ENCODE measurements at regions of chr1 and their contacts with region 1.

Region 1: DNA sequence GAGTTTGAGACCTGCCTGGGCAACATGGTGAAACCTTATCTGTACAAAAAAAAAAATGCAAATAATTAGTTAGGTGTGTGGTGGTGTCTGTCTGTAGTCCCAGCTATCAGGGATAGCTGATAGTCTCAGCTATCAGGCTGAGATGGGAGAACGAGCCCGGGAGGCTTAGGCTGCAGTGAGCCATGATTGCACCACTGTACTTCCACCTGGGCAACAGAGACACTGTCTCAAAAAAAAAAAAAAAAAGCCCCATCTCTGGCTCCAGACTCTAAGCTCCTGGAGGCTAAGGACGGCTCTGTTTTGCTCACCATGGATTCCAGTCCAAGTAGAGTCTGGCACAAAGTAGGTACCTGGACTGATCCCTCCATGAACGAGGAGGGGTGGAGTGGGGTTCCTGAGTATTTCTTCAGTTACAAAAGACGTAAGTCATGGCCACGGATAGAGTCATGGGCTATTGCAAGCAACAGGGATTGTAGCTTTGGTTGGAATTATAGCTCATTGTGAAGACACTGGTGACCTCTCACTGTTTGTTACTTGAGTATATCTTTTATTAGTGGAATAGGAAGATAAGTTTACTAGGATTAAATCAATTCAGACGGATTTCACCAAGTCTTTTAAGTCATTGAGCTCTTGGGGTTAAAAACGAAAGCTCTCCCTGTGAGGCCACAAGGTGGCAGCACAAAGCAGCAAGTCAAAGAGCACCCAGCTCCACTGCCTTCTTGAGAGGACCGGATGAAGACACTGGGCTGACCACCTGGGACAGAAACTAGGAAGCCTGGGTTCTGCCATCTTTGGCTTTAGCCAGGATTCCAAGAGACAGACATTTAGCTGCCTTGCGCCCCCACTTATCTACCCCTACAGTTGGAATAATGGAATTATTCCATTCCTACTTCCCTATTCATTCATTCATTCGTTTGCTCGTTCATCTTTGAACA is 35.6 kb upstream of the TMEM61 start:
- DNase-seq: peak; percentile 17 to 61 (median 45)
- ATAC-seq: peak; percentile 80
- H3K4me3 ChIP-seq: no peak overlapping the region
- H3K4me3 Mint-ChIP-seq: peak overlapping the region in 1 of 10 donors; percentile 28
- H3K27ac ChIP-seq: no peak overlapping the region
- H3K27ac Mint-ChIP-seq: no peak overlapping the region
- H3K4me1 ChIP-seq: peaks cover 3 to 7% of the 10 kb centered on the region in 2 donors
- H3K4me1 Mint-ChIP-seq: peaks cover 9 to 16% (median 11%) of the 10 kb centered on the region in 7 donors
- H3K27me3 ChIP-seq: no peaks in the 10 kb centered on the region
- H3K27me3 Mint-ChIP-seq: peaks cover 0 to 11% (median 0%) of the 10 kb centered on the region in 5 donors

Region 2: GRCh38 chr1:54671985-54672608 is 272.8 kb before region 1 on chr1:
- CTCF ChIA-PET with region 1: no interaction called
- POLR2A ChIA-PET with region 1: no interaction called
- intact Hi-C with region 1: loop called in 1 of 2 experiments (anchors 5 kb)
- DNase-seq: peak; percentile 18 to 69 (median 53)
- ATAC-seq: peak; percentile 86
- H3K4me3 ChIP-seq: no peak overlapping the region
- H3K4me3 Mint-ChIP-seq: no peak overlapping the region
- H3K27ac ChIP-seq: no peak overlapping the region
- H3K27ac Mint-ChIP-seq: no peak overlapping the region
- H3K4me1 ChIP-seq: no peaks in the 10 kb centered on the region
- H3K4me1 Mint-ChIP-seq: peaks cover 0 to 6% (median 0%) of the 10 kb centered on the region in 7 donors
- H3K27me3 ChIP-seq: no peaks in the 10 kb centered on the region
- H3K27me3 Mint-ChIP-seq: peaks cover 0 to 10% (median 0%) of the 10 kb centered on the region in 5 donors

Region 3: GRCh38 chr1:55304229-55304740 is 359.4 kb after region 1 on chr1:
- CTCF ChIA-PET with region 1: no interaction called
- POLR2A ChIA-PET with region 1: no interaction called
- intact Hi-C with region 1: no loop called
- DNase-seq: no peak
- ATAC-seq: no peak
- H3K4me3 ChIP-seq: no peak overlapping the region
- H3K4me3 Mint-ChIP-seq: no peak overlapping the region
- H3K27ac ChIP-seq: no peak overlapping the region
- H3K27ac Mint-ChIP-seq: no peak overlapping the region
- H3K4me1 ChIP-seq: no peaks in the 10 kb centered on the region
- H3K4me1 Mint-ChIP-seq: no peaks in the 10 kb centered on the region
- H3K27me3 ChIP-seq: no peaks in the 10 kb centered on the region
- H3K27me3 Mint-ChIP-seq: peaks cover 3 to 27% (median 12%) of the 10 kb centered on the region in 5 donors

Measured in naive thymus-derived CD4-positive, alpha-beta T cell (primary cell).